Posterior vena cava (tissue), 2 donors: ENCODE measurements at regions of chr13 and their contacts with region 1.

Region 1: GRCh38 chr13:106525863-106526262 is 9.6 kb downstream of the EFNB2 start:
- DNase-seq: no peak

Region 2: GRCh38 chr13:106499896-106500295 is 26.0 kb before region 1 on chr13:
- intact Hi-C with region 1: loop called in 1 of 2 experiments (anchors 1 kb)
- DNase-seq: no peak